GM12878 (cell line): ENCODE measurements at regions of chr11 and their contacts with region 1.

Region 1: GRCh38 chr11:1050581-1051355 is 14.2 kb upstream of the MUC6 start:
- DNase-seq: no peak
- ATAC-seq: peak; percentile 100
- H3K4me3 ChIP-seq: no peak overlapping the region
- H3K27ac ChIP-seq: no peak overlapping the region
- H3K4me1 ChIP-seq: no peaks in the 10 kb centered on the region
- H3K27me3 ChIP-seq: no peaks in the 10 kb centered on the region
- CTCF ChIP-seq: peak; percentile 89 to 97 (median 94)
- EP300 ChIP-seq: no peak
- POLR2A ChIP-seq: no peak
- RAD21 ChIP-seq: peak; percentile 89

Region 2: GRCh38 chr11:848380-848931 is 202.3 kb before region 1 on chr11:
- CTCF ChIA-PET with region 1: interaction called, 23 read pairs
- POLR2A ChIA-PET with region 1: no interaction called
- RAD21 ChIA-PET with region 1: interaction called, 3 read pairs
- SMC1A ChIA-PET with region 1: no interaction called
- in situ Hi-C with region 1: loop called (anchors 10 kb)
- intact Hi-C with region 1: loop called (anchors 1 kb)
- DNase-seq: no peak
- ATAC-seq: peak; percentile 72
- H3K4me3 ChIP-seq: no peak overlapping the region
- H3K27ac ChIP-seq: no peak overlapping the region
- H3K4me1 ChIP-seq: peaks cover 8% of the 10 kb centered on the region
- H3K27me3 ChIP-seq: no peaks in the 10 kb centered on the region; a peak in 1 of 4 replicates
- CTCF ChIP-seq: peak; percentile 80 to 98 (median 86)
- EP300 ChIP-seq: no peak
- POLR2A ChIP-seq: no peak
- RAD21 ChIP-seq: peak; percentile 87

Region 3: GRCh38 chr11:925496-926321 is 125.1 kb before region 1 on chr11 and contains the start of gene AP2A2:
- CTCF ChIA-PET with region 1: interaction called, 5 read pairs
- POLR2A ChIA-PET with region 1: interaction called, 4 read pairs
- RAD21 ChIA-PET with region 1: no interaction called
- SMC1A ChIA-PET with region 1: no interaction called
- in situ Hi-C with region 1: no loop called
- intact Hi-C with region 1: loop called (anchors 5 kb)
- DNase-seq: no peak
- ATAC-seq: peak; percentile 78
- H3K4me3 ChIP-seq: peak within 1 kb of the TSS; percentile 66
- H3K27ac ChIP-seq: peak within 1 kb of the TSS; percentile 63
- H3K4me1 ChIP-seq: peaks cover 7% of the 10 kb centered on the region; the same call in 1 of the 2 replicates
- H3K27me3 ChIP-seq: no peaks in the 10 kb centered on the region
- CTCF ChIP-seq: peak; percentile 46 to 77 (median 58); a peak in 5 of 6 replicates
- EP300 ChIP-seq: no peak
- POLR2A ChIP-seq: peak; percentile 82
- RAD21 ChIP-seq: peak; percentile 17; the same call in 1 of the 2 replicates
- polyA plus RNA-seq, gene AP2A2: 0.58 to 2.6 TPM

Region 4: GRCh38 chr11:986294-986959 is 64.3 kb before region 1 on chr11:
- CTCF ChIA-PET with region 1: no interaction called
- POLR2A ChIA-PET with region 1: no interaction called
- RAD21 ChIA-PET with region 1: no interaction called
- SMC1A ChIA-PET with region 1: no interaction called
- in situ Hi-C with region 1: no loop called
- intact Hi-C with region 1: no loop called
- DNase-seq: no peak
- ATAC-seq: no peak
- H3K4me3 ChIP-seq: no peak overlapping the region
- H3K27ac ChIP-seq: no peak overlapping the region
- H3K4me1 ChIP-seq: no peaks in the 10 kb centered on the region
- H3K27me3 ChIP-seq: no peaks in the 10 kb centered on the region
- CTCF ChIP-seq: no peak
- EP300 ChIP-seq: no peak
- POLR2A ChIP-seq: no peak
- RAD21 ChIP-seq: no peak

Region 5: DNA sequence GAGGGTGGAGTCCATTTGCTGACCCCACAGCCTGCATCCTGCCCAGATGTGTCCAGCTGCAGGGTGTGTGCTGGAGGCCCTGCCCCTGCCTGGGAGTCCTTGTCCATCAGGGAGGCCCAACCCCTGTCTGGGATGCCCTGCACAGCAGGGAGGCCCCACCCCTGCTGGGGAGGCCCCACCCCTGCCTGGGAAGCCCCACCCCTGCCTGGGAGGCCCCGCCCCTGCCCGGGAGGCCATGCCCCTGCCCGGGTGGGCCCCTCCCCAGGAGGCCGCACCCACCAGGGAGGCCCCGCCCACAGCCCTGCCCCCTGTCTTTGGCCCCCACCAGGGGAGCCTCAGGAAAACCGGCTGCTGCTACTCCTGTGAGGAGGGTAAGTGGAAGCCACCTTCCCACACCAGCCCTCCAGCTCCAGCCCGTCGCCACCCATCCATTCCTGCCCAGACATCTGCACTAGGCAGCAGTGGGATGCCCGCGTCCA is 209.3 kb after region 1 on chr11:
- CTCF ChIA-PET with region 1: no interaction called
- POLR2A ChIA-PET with region 1: no interaction called
- RAD21 ChIA-PET with region 1: no interaction called
- SMC1A ChIA-PET with region 1: no interaction called
- in situ Hi-C with region 1: no loop called
- intact Hi-C with region 1: no loop called
- DNase-seq: no peak
- ATAC-seq: peak; percentile 52
- H3K4me3 ChIP-seq: no peak overlapping the region
- H3K27ac ChIP-seq: no peak overlapping the region
- H3K4me1 ChIP-seq: 0 out of 2 replicates have a peak, but pooled peaks cover 2% of the 10 kb centered on the region
- H3K27me3 ChIP-seq: no peaks in the 10 kb centered on the region
- CTCF ChIP-seq: no peak
- EP300 ChIP-seq: no peak
- POLR2A ChIP-seq: no peak
- RAD21 ChIP-seq: no peak